Vagina (tissue), 2 donors: ENCODE measurements at regions of chr3 and their contacts with region 1.

Region 1: GRCh38 chr3:96101015-96101667 is 713.3 kb upstream of the EPHA6 start:
- DNase-seq: no peak
- H3K4me3 ChIP-seq: no peak overlapping the region
- H3K27ac ChIP-seq: no peak overlapping the region
- H3K4me1 ChIP-seq: no peaks in the 10 kb centered on the region
- H3K27me3 ChIP-seq: no peaks in the 10 kb centered on the region
- CTCF ChIP-seq: no peak
- POLR2A ChIP-seq: no peak

Region 2: GRCh38 chr3:96111951-96112350 is 10.8 kb after region 1 on chr3:
- intact Hi-C with region 1: loop called (anchors 1 kb)
- DNase-seq: no peak
- H3K4me3 ChIP-seq: no peak overlapping the region
- H3K27ac ChIP-seq: no peak overlapping the region
- H3K4me1 ChIP-seq: no peaks in the 10 kb centered on the region
- H3K27me3 ChIP-seq: no peaks in the 10 kb centered on the region
- CTCF ChIP-seq: no peak
- POLR2A ChIP-seq: no peak

Region 3: GRCh38 chr3:96354742-96355141 is 253.6 kb after region 1 on chr3:
- intact Hi-C with region 1: no loop called
- DNase-seq: no peak
- H3K4me3 ChIP-seq: no peak overlapping the region
- H3K27ac ChIP-seq: no peak overlapping the region
- H3K4me1 ChIP-seq: no peaks in the 10 kb centered on the region
- H3K27me3 ChIP-seq: no peaks in the 10 kb centered on the region
- CTCF ChIP-seq: no peak
- POLR2A ChIP-seq: no peak